Calu3 (cell line): ENCODE measurements at regions of chr19 and their contacts with region 1.

Region 1: DNA sequence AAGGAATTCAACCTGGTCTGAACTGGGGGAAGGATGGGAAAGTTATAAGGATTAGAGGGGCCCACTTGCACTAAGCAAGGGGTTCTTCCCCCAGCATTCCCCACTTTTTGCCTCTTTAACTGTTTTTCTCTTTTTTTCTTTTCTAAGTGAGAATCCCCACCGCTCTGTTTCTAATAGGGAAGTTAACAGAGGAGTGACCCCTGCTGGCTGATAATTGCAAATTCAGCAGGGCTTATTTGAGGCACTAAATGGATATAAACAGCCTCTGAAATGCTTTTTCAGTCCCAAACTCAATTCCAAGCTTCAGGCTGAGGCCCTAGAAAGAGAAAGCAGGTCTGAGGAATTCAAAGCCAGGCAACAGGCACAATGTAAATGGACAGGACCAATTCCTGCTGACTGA is 38.2 kb upstream of the CEACAM21 start:
- DNase-seq: no peak
- H3K4me3 Mint-ChIP-seq: no peak overlapping the region
- H3K27ac Mint-ChIP-seq: no peak overlapping the region
- H3K4me1 Mint-ChIP-seq: peaks cover 24% of the 10 kb centered on the region
- H3K27me3 Mint-ChIP-seq: peaks cover 67% of the 10 kb centered on the region
- CTCF ChIP-seq: peak; percentile 59

Region 2: DNA sequence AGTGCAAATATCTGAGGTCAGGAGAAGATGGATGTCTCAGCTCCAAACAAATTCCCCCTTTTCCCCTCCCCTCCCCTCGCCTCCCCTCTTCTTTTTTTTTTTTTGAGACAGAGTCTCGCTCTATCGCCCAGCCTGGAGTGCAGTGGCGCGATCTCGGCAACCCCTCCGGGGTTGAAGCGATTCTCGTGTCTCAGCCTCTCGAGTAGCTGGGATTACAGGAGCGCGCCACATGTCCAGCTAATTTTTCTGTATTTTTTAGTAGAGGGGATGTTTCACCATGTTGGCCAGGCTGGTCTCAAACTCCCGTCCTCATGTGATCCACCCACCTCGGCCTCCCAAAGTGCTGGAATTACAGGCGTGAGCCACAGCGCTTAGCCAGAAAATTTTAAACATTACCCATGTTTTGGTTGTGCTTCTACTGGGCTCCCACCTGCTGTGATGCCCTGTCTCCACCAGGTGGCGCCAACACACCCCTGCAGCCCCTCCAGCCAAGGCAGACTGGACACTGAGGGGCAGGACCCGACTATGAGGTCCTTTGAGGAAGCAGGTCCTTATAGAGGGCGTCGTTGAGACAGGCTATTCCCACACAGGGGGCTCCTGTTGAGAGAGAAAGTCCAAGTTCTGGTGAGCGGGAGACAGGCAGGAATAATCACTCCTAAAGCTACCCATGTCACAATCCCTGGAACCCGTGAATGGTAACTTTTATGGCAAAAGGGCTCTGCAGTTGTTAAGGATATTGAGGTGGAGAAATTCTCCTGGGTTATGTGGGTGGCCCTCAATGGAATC is 88.5 kb before region 1 on chr19:
- CTCF ChIA-PET with region 1: interaction called, 3 read pairs
- intact Hi-C with region 1: loop called (anchors 2 kb)
- DNase-seq: peak; percentile 87
- H3K4me3 Mint-ChIP-seq: peak overlapping the region; percentile 51
- H3K27ac Mint-ChIP-seq: peak overlapping the region; percentile 11
- H3K4me1 Mint-ChIP-seq: peaks cover 11% of the 10 kb centered on the region
- H3K27me3 Mint-ChIP-seq: peaks cover 32% of the 10 kb centered on the region
- CTCF ChIP-seq: peak; percentile 97